CD8-positive, alpha-beta T cell (primary cell): ENCODE measurements at regions of chr2 and their contacts with region 1.

Region 1: DNA sequence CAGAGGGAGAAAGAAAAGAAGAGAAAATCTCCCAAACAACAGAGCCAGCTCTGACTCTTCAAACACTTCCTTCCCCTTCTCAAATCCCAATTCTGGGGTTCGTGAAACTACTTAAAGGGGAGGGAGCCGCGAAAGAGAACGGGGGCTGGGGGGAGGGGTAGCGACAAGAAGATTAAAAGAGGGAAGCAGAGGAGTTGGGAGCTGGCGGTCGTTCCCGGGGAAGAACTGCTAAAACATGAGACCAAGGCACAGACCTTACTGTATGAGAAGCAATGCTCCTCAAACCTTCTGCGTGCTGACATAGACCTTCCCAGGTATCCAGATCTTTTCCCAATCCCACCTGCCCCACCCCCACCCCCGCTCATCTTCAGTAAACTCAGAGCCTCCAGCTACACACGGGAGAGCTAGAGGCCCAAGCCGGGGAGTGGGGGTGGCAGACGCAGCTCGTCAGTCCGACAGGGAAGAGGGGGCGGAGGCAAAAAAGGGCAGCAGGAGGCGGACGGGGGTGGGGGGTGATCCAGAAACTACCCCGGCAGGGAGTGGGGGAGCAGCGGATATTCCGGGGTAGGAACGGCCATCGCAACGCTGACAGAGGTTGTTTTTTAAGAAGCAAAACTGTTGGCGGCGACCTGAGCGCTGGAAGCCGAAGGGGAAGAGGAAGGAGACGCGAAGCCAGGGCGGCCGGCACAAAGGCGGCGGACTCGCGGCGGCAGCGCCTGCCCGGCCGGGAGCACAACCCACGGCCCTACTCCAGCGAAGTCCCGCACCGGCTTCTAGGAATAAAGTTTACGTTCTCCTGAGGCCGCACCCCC is 1.0 kb downstream of the BAZ2B start:
- DNase-seq: peak in 8 of 9 experiments; percentile 15 to 68 (median 34)
- ATAC-seq: peak; percentile 68
- H3K4me3 ChIP-seq: peak overlapping the region; percentile 60 to 65
- H3K4me3 Mint-ChIP-seq: peak overlapping the region; percentile 84
- H3K27ac ChIP-seq: no peak overlapping the region
- H3K27ac Mint-ChIP-seq: no peak overlapping the region
- H3K4me1 ChIP-seq: no peaks in the 10 kb centered on the region
- H3K4me1 Mint-ChIP-seq: peaks cover 17% of the 10 kb centered on the region
- H3K27me3 ChIP-seq: no peaks in the 10 kb centered on the region
- H3K27me3 Mint-ChIP-seq: peaks cover 20% of the 10 kb centered on the region
- CTCF ChIP-seq: no peak

Region 2: DNA sequence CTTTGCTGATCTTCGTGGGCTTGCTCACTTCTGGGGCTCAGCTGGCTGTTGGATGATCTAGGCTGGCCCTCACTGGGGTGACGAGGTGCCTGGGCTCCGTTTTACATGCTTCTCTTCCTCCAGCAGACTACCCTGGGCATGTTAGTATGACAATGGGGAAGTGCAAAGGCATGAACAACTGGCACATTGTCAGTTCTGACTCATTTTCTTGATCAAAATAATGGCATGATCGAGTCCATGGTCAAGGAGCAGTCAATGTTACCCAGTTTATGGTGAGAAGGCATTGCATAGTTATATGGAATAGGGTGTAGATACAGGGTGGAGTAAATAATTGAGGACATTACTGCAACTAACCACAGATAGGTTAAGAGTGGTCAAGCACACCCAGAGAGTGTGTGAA is 1523.7 kb before region 1 on chr2:
- CTCF ChIA-PET with region 1: no interaction called
- POLR2A ChIA-PET with region 1: no interaction called
- intact Hi-C with region 1: no loop called
- DNase-seq: no peak
- ATAC-seq: no peak
- H3K4me3 ChIP-seq: no peak overlapping the region
- H3K4me3 Mint-ChIP-seq: no peak overlapping the region
- H3K27ac ChIP-seq: no peak overlapping the region
- H3K27ac Mint-ChIP-seq: no peak overlapping the region
- H3K4me1 ChIP-seq: no peaks in the 10 kb centered on the region
- H3K4me1 Mint-ChIP-seq: no peaks in the 10 kb centered on the region
- H3K27me3 ChIP-seq: no peaks in the 10 kb centered on the region
- H3K27me3 Mint-ChIP-seq: peaks cover 24% of the 10 kb centered on the region
- CTCF ChIP-seq: no peak

Region 3: DNA sequence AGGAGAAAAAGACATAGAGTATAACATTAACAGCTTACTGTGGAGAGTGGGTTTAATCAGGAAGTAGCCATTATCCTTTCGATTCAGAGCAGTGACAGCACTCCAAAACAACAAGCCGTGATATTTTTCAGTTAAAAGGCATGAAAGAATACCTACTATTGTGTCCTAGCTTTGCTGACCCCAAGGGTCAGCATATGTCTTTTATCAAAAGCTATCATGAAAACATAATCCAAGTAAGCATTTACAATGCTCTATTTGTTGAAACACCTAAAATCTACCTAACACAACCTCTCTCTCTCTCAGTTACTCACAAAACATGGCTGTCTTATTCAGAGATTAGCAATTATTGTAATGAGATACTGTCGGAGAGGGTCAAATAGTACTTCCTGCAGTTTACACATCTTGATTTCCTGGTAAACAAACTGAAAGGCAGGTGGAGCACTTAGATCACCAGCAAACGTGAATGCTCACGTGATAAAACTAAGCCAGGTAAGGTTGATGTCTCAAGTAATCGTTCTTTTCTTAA is 99.0 kb before region 1 on chr2:
- CTCF ChIA-PET with region 1: no interaction called
- POLR2A ChIA-PET with region 1: no interaction called
- intact Hi-C with region 1: loop called in 1 of 2 experiments (anchors 5 kb)
- DNase-seq: peak in 3 of 9 experiments; percentile 29 to 84 (median 74)
- ATAC-seq: peak; percentile 96
- H3K4me3 ChIP-seq: peak overlapping the region; percentile 48 to 50
- H3K4me3 Mint-ChIP-seq: peak overlapping the region; percentile 81
- H3K27ac ChIP-seq: peak overlapping the region; percentile 69 to 72
- H3K27ac Mint-ChIP-seq: peak overlapping the region; percentile 95
- H3K4me1 ChIP-seq: peaks cover 19% of the 10 kb centered on the region
- H3K4me1 Mint-ChIP-seq: peaks cover 38% of the 10 kb centered on the region
- H3K27me3 ChIP-seq: no peaks in the 10 kb centered on the region
- H3K27me3 Mint-ChIP-seq: no peaks in the 10 kb centered on the region
- CTCF ChIP-seq: no peak

Region 4: GRCh38 chr2:159564081-159564480 is 51.3 kb before region 1 on chr2:
- CTCF ChIA-PET with region 1: no interaction called
- POLR2A ChIA-PET with region 1: no interaction called
- intact Hi-C with region 1: no loop called
- DNase-seq: no peak
- ATAC-seq: no peak
- H3K4me3 ChIP-seq: no peak overlapping the region
- H3K4me3 Mint-ChIP-seq: no peak overlapping the region
- H3K27ac ChIP-seq: no peak overlapping the region
- H3K27ac Mint-ChIP-seq: no peak overlapping the region
- H3K4me1 ChIP-seq: no peaks in the 10 kb centered on the region
- H3K4me1 Mint-ChIP-seq: no peaks in the 10 kb centered on the region
- H3K27me3 ChIP-seq: no peaks in the 10 kb centered on the region
- H3K27me3 Mint-ChIP-seq: no peaks in the 10 kb centered on the region
- CTCF ChIP-seq: no peak